Gastrocnemius medialis (tissue), 4 donors: ENCODE measurements at regions of chr10 and their contacts with region 1.

Region 1: GRCh38 chr10:77586719-77587415 is 50.7 kb downstream of the KCNMA1 start:
- DNase-seq: peak; percentile 89 to 97
- ATAC-seq: peak; percentile 84
- H3K4me3 ChIP-seq: no peak overlapping the region
- H3K27ac ChIP-seq: peak overlapping the region; percentile 94 to 99 (median 96)
- H3K4me1 ChIP-seq: peaks cover 53 to 63% of the 10 kb centered on the region in 2 donors
- H3K27me3 ChIP-seq: no peaks in the 10 kb centered on the region
- CTCF ChIP-seq: no peak
- POLR2A ChIP-seq: peak; percentile 47 to 72

Region 2: DNA sequence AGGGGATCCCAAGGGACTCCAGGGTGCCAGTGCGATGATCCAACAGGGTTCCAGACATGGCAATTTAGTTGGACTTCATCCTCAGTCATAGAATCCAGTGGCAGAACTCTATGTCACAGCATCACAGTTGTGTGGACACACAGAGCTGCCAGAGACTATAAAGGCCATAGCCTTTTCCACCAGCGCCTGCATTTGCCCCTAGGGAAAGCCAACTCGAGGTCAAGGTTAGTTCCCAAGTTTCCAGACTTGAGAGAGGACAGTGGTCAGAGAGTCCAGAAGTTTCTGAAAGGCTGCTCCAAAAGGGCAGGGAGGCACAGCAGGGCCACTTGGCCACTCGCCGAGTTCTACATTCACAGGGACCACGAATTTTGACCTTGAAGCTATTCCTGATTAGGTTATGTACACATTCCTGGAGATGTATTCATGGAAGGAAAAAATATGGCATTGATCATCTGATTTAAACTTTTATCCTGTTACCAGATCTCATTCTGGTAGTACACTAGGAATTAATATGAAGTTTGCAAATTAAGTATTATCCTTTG is 119.4 kb before region 1 on chr10:
- in situ Hi-C with region 1: no loop called
- intact Hi-C with region 1: no loop called
- DNase-seq: no peak
- ATAC-seq: no peak
- H3K4me3 ChIP-seq: no peak overlapping the region
- H3K27ac ChIP-seq: peak overlapping the region in 1 of 4 donors; percentile 30
- H3K4me1 ChIP-seq: peaks cover 31 to 33% of the 10 kb centered on the region in 2 donors
- H3K27me3 ChIP-seq: no peaks in the 10 kb centered on the region
- CTCF ChIP-seq: no peak
- POLR2A ChIP-seq: no peak

Region 3: GRCh38 chr10:77548151-77548550 is 38.7 kb before region 1 on chr10:
- in situ Hi-C with region 1: no loop called
- intact Hi-C with region 1: loop called (anchors 2 kb)
- DNase-seq: peak; percentile 96 to 99
- ATAC-seq: peak; percentile 87 to 89
- H3K4me3 ChIP-seq: no peak overlapping the region
- H3K27ac ChIP-seq: peak overlapping the region; percentile 79 to 93 (median 88)
- H3K4me1 ChIP-seq: peaks cover 56 to 57% of the 10 kb centered on the region in 2 donors
- H3K27me3 ChIP-seq: no peaks in the 10 kb centered on the region
- CTCF ChIP-seq: no peak
- POLR2A ChIP-seq: peak in 1 of 2 donors; percentile 42

Region 4: GRCh38 chr10:77609781-77610272 is 23.0 kb after region 1 on chr10:
- in situ Hi-C with region 1: no loop called
- intact Hi-C with region 1: no loop called
- DNase-seq: no peak
- ATAC-seq: peak; percentile 65 to 79
- H3K4me3 ChIP-seq: no peak overlapping the region
- H3K27ac ChIP-seq: peak overlapping the region; percentile 43 to 72 (median 62)
- H3K4me1 ChIP-seq: peaks cover 19 to 47% of the 10 kb centered on the region in 2 donors
- H3K27me3 ChIP-seq: no peaks in the 10 kb centered on the region
- CTCF ChIP-seq: no peak
- POLR2A ChIP-seq: no peak